CD8-positive, alpha-beta T cell (primary cell): ENCODE measurements at regions of chr11 and their contacts with region 1.

Region 1: DNA sequence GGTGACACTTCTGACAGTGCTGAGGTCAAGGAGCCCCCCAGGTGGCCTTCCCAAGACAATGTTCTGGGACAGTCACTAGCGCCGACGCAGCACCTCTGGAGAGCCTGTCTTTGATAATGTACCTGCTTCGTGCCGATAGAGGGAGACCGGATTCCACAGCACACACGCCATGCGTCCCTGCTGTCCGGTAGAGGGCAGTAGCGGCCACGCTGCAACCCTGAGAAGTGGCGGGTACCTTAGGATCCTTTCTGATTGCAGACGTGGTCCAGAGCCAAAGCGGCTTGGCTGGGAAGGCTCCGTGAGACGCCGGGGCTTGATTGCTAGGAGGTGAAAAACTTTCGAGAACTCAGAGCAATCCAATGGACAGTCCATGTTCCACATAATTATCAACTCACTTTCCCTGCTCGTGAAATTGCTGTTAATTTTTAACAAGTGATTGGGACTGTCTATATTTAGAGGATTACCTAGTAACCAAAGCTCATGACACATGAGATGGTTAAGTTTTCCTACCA is 11.4 kb upstream of the BARX2 start:
- DNase-seq: peak; percentile 35 to 85 (median 69)
- ATAC-seq: peak; percentile 87
- H3K4me3 ChIP-seq: no peak overlapping the region
- H3K4me3 Mint-ChIP-seq: no peak overlapping the region
- H3K27ac ChIP-seq: no peak overlapping the region
- H3K27ac Mint-ChIP-seq: no peak overlapping the region
- H3K4me1 ChIP-seq: no peaks in the 10 kb centered on the region
- H3K4me1 Mint-ChIP-seq: no peaks in the 10 kb centered on the region
- H3K27me3 ChIP-seq: peaks cover 0 to 7% of the 10 kb centered on the region in 2 experiments
- H3K27me3 Mint-ChIP-seq: peaks cover 34% of the 10 kb centered on the region
- CTCF ChIP-seq: peak; percentile 84

Region 2: DNA sequence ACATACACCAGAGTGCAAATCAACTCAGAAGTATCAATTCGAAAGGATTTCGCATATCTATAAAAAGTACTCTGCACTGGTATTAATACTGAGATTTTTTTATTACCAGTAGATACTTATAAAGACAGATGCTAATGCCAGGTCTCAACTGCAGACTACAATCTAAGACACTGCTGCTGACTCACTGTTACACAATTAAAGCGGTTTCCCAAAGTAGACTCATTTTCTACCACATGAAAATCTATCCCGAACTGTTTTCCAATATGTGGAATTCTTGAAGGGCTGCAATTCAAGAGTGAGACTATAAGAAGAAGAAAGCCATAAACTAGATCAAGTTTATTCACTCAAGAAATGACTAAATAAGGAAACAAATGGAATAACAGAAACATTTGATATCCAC is 114.8 kb before region 1 on chr11:
- CTCF ChIA-PET with region 1: no interaction called
- POLR2A ChIA-PET with region 1: no interaction called
- intact Hi-C with region 1: no loop called
- DNase-seq: no peak
- ATAC-seq: no peak
- H3K4me3 ChIP-seq: no peak overlapping the region
- H3K4me3 Mint-ChIP-seq: no peak overlapping the region
- H3K27ac ChIP-seq: no peak overlapping the region
- H3K27ac Mint-ChIP-seq: no peak overlapping the region
- H3K4me1 ChIP-seq: peaks cover 7% of the 10 kb centered on the region
- H3K4me1 Mint-ChIP-seq: peaks cover 11% of the 10 kb centered on the region
- H3K27me3 ChIP-seq: no peaks in the 10 kb centered on the region
- H3K27me3 Mint-ChIP-seq: no peaks in the 10 kb centered on the region
- CTCF ChIP-seq: no peak

Region 3: GRCh38 chr11:129695575-129696308 is 331.5 kb after region 1 on chr11:
- CTCF ChIA-PET with region 1: no interaction called
- POLR2A ChIA-PET with region 1: no interaction called
- intact Hi-C with region 1: loop called in 1 of 2 experiments (anchors 5 kb)
- DNase-seq: peak; percentile 34 to 80 (median 70)
- ATAC-seq: peak; percentile 95
- H3K4me3 ChIP-seq: peak overlapping the region; percentile 62 to 76
- H3K4me3 Mint-ChIP-seq: peak overlapping the region; percentile 88
- H3K27ac ChIP-seq: peak overlapping the region in 1 of 2 experiments; percentile 1
- H3K27ac Mint-ChIP-seq: peak overlapping the region; percentile 77
- H3K4me1 ChIP-seq: peaks cover 5% of the 10 kb centered on the region
- H3K4me1 Mint-ChIP-seq: peaks cover 8% of the 10 kb centered on the region
- H3K27me3 ChIP-seq: no peaks in the 10 kb centered on the region
- H3K27me3 Mint-ChIP-seq: peaks cover 23% of the 10 kb centered on the region
- CTCF ChIP-seq: peak; percentile 38

Region 4: DNA sequence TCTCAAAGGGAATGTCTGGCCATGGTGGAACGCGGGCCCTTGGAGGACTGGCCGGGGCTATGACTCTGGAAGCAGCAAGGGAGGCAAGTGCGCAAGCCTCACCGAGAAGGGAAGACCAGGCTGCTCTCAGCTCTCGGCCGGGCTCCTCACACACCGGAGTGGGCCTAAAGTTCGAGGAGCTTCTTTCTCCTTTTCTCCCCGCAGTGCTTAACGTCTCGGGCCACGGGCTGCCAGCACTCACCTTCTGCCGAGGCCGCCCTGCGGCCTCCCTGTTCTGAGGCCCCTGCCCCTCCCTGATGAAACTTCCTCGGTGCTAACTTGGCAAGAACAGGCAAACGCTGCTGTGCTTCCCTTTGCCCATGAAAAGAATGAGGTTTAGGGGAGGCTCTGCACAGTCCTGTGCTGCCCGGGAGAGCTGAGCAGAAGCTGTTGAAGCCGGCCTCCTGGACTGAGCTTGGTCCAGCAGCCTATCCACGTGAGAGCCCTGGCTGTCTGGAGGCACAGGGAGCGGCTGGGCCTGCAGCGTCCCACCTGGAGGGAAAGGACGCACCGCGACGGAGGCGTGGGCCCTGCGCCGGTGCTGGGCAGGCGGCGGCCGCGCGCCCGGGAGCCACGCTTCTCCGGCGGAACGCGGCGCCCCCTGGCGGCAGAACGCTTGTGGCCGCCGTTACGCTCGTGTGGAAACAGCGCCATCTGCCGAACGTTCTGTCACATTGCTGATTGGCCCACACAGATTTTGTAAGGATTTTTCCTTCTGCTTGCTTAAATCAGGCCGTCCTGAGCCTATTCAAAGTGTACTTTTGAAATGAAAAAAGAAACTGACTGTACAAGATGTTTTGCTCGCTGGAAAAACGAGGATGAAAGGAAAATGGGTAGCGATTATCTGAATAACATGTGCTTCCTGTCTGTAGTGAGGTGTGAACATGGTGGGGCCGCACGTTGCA is 386.4 kb after region 1 on chr11:
- CTCF ChIA-PET with region 1: interaction called, 3 read pairs
- POLR2A ChIA-PET with region 1: no interaction called
- intact Hi-C with region 1: loop called in 1 of 2 experiments (anchors 5 kb)
- DNase-seq: peak; percentile 59 to 88 (median 77)
- ATAC-seq: peak; percentile 93
- H3K4me3 ChIP-seq: peak overlapping the region; percentile 19 to 36
- H3K4me3 Mint-ChIP-seq: peak overlapping the region; percentile 53
- H3K27ac ChIP-seq: no peak overlapping the region
- H3K27ac Mint-ChIP-seq: no peak overlapping the region
- H3K4me1 ChIP-seq: peaks cover 5% of the 10 kb centered on the region
- H3K4me1 Mint-ChIP-seq: peaks cover 4% of the 10 kb centered on the region
- H3K27me3 ChIP-seq: no peaks in the 10 kb centered on the region
- H3K27me3 Mint-ChIP-seq: peaks cover 7% of the 10 kb centered on the region
- CTCF ChIP-seq: peak; percentile 100